ENCODE measurements at regions of chr19 and their contacts with region 1.

Region 1: GRCh38 chr19:34220472-34221063 is 33.8 kb upstream of the GARRE1 start:
- DNase-seq: peak in 3 of 5 donors; percentile 19 to 55 (median 45)
- H3K4me3 ChIP-seq: no peak overlapping the region
- H3K27ac ChIP-seq: no peak overlapping the region
- H3K4me1 ChIP-seq: no peaks in the 10 kb centered on the region
- H3K27me3 ChIP-seq: no peaks in the 10 kb centered on the region
- CTCF ChIP-seq: peak in 2 of 3 donors; percentile 19 to 39
- EP300 ChIP-seq: no peak
- POLR2A ChIP-seq: no peak

Region 2: GRCh38 chr19:33977756-33978685 is 242.5 kb before region 1 on chr19:
- intact Hi-C with region 1: no loop called
- DNase-seq: no peak
- H3K4me3 ChIP-seq: no peak overlapping the region
- H3K27ac ChIP-seq: no peak overlapping the region
- H3K4me1 ChIP-seq: no peaks in the 10 kb centered on the region
- H3K27me3 ChIP-seq: no peaks in the 10 kb centered on the region
- CTCF ChIP-seq: no peak
- EP300 ChIP-seq: no peak
- POLR2A ChIP-seq: no peak

Region 3: GRCh38 chr19:34193439-34193838 is 27.1 kb before region 1 on chr19:
- intact Hi-C with region 1: no loop called
- DNase-seq: no peak
- H3K4me3 ChIP-seq: no peak overlapping the region
- H3K27ac ChIP-seq: no peak overlapping the region
- H3K4me1 ChIP-seq: peaks cover 2% of the 10 kb centered on the region
- H3K27me3 ChIP-seq: no peaks in the 10 kb centered on the region
- CTCF ChIP-seq: no peak
- EP300 ChIP-seq: no peak
- POLR2A ChIP-seq: no peak

Region 4: GRCh38 chr19:34345947-34346351 is 125.4 kb after region 1 on chr19:
- intact Hi-C with region 1: loop called in 1 of 4 experiments (anchors 10 kb)
- DNase-seq: peak in 4 of 5 donors; percentile 25 to 63 (median 48)
- H3K4me3 ChIP-seq: no peak overlapping the region
- H3K27ac ChIP-seq: no peak overlapping the region
- H3K4me1 ChIP-seq: no peaks in the 10 kb centered on the region
- H3K27me3 ChIP-seq: no peaks in the 10 kb centered on the region
- CTCF ChIP-seq: no peak
- EP300 ChIP-seq: no peak
- POLR2A ChIP-seq: no peak

Region 5: DNA sequence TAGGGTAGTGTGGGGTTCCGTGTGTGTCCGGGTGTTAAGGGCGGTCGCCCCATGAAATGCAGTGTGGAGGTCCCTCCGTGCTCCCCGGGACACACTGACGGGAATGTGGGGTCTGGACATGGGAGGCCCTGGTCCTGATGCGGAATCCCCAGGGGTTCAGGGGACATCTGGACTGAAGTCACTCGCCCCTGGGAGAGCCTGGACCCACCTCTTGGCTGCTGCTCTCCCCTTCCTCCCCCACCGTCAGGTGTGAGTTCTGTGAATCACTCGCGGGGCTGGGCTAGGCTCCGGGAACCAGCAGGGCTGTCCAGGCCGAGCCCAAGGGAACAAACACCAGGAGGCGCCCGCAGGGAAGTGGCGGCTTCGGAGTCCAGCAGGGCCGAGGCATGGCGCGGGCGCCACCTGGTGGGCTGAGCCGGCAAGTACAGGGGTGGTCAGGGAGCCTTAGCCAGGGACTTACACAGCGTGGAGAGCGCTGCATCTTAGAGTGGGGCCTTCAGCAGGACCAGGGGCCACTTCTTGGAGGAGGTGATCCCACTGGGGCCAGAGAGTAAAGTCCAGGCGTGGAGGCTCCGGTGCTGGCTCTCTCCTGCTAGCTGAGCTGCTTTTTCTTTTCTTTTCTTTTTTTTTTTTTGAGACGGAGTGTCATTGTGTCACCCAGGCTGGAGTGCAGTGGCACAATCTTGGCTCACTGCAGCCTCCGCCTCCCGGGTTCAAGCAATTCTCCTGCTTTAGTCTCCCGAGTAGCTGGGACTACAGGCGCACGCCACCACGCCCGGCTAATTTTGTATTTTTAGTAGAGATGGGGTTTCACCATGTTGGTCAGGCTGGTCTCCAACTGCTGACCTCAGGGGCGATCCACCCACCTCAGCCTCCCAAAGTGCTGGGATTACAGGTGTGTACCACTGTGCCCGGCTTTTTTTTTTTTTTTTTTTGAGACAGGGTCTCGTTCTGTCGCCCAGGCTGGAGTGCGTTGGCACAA is 281.1 kb after region 1 on chr19:
- intact Hi-C with region 1: loop called in 1 of 4 experiments (anchors 10 kb)
- DNase-seq: peak; percentile 88 to 95 (median 93)
- H3K4me3 ChIP-seq: no peak overlapping the region
- H3K27ac ChIP-seq: no peak overlapping the region
- H3K4me1 ChIP-seq: peaks cover 2% of the 10 kb centered on the region
- H3K27me3 ChIP-seq: no peaks in the 10 kb centered on the region
- CTCF ChIP-seq: peak; percentile 95 to 98 (median 97)
- EP300 ChIP-seq: no peak
- POLR2A ChIP-seq: no peak